ENCODE measurements at regions of chr20 and their contacts with region 1.

Region 1: GRCh38 chr20:24160563-24161375 is 172.2 kb upstream of the GGTLC1 start:
- DNase-seq: peak; percentile 37
- H3K4me3 ChIP-seq: no peak overlapping the region
- CTCF ChIP-seq: peak; percentile 90

Region 2: GRCh38 chr20:24112394-24112793 is 48.4 kb before region 1 on chr20:
- CTCF ChIA-PET with region 1: no interaction called
- POLR2A ChIA-PET with region 1: no interaction called
- DNase-seq: no peak
- H3K4me3 ChIP-seq: no peak overlapping the region
- CTCF ChIP-seq: no peak

Region 3: DNA sequence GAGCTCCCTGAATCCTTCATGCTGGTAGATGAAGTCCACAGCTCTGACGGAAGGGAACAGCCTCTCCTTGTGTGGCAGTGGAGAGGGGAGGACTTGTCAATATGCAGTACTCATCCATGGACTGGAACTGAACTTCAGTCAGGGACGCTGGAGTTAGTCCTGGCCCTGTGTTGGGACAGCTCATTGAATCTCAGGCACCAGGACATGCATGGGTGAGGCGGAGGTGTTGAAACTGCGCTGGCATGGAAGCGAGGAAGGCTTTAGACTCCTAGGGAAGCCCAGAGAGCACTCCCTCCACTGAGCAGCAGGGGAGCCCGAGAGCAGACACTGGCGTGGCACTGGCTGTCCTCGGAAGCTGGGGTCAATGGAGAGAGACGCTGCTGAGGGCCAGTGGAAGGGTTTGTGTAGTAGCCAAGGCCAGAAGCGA is 10.9 kb before region 1 on chr20:
- CTCF ChIA-PET with region 1: interaction called, 66 read pairs
- POLR2A ChIA-PET with region 1: no interaction called
- DNase-seq: no peak
- H3K4me3 ChIP-seq: no peak overlapping the region
- CTCF ChIP-seq: peak; percentile 52

Region 4: GRCh38 chr20:24318569-24319352 is 158.0 kb after region 1 on chr20:
- CTCF ChIA-PET with region 1: no interaction called
- POLR2A ChIA-PET with region 1: no interaction called
- DNase-seq: no peak
- H3K4me3 ChIP-seq: no peak overlapping the region
- CTCF ChIP-seq: no peak

Region 5: DNA sequence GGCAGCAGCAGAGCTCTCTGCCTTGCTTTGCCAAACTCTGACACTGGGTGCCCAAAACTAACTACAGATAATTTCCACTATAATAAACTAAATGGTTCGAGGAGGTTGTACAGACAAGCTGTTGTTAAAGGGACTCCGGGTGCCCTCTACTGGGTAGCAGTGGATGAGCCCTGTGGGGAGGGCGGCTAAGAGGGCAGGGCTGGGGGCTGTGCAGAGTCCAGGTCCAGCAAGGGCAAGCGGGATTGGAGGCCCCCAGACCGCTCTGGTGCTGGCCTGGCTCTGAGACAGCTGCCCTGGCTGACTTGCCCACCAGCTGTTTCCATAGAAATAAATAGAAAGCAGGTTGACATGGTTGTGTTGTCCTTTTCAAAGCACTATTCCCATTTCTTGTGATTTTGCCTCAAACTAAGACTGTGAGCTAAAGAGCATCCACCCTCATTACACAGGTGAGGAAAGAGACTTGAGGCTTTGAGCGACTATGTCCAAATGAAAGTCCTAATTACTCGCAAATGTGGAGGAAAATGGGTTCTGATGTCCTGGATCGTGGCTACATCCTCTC is 620.7 kb after region 1 on chr20:
- CTCF ChIA-PET with region 1: interaction called, 25 read pairs
- POLR2A ChIA-PET with region 1: no interaction called
- DNase-seq: no peak
- H3K4me3 ChIP-seq: no peak overlapping the region
- CTCF ChIP-seq: peak; percentile 75

Region 6: DNA sequence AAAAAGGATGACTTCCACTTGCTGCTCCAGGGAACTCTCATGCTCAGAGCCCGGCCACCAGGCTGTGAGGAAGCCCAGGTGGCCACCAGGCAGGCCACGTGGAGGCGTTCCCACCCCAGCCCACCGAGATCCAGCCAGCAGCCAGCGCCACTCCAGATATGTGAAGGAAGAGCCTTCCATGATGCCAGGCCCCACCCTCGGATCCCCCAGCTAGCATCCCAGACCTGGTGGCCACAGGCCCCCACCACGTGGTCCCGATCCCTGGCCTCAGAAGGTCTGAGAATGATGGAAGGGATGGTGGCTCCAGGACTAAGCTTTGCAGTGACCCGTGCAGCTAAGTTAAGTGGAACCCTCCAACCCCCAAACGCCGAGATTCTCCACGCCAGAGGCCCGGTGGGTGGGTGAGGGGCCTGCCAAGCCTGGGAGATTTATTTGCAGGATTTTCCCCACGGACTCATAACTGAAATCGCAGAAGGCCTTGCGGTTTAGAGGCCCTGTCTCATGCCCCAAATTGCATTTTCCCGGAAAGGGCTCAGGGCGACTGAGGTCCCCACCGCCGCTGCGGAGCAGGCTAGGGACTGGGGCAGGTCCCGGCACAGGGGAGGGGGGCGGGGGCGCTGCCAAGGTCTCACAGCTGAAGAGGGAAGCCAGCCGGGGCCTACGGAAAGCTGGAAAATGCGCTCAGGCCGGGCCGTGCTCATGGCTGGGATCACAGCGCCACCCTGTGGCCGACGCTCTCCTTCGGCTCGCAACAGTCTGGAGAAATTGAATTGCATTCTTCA is 757.2 kb after region 1 on chr20:
- CTCF ChIA-PET with region 1: interaction called, 67 read pairs
- POLR2A ChIA-PET with region 1: no interaction called
- DNase-seq: peak; percentile 9
- H3K4me3 ChIP-seq: no peak overlapping the region
- CTCF ChIP-seq: peak; percentile 90

Measured in AG04449 (cell line).